ENCODE measurements at regions of chr15 and their contacts with region 1.

Region 1: DNA sequence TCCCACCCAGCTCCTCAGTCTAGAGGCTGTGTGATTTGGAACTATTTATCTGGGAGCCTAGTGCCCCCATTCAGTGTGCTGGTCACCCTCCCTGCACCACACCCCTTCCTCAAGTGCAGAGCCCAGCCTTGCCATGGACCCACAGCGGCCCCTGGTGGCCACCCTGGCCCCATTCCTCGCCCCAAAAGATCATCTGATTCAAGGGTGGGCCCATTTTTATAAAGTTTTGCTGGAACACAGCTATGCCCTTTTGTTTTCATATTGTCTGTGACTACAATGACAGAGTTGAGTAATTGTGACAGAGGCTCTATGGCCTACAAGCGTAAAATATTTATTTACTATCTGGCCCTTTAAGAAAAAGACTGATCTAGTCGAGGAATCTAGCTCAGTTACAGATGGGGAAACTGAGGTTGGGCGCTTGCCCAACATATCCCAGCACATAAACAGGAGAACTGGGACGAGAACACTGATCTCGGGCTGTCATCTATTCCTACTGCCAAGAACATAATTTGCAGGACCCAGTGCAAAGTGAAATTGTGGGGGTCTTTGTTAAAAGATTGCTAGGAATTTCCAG is 1.8 kb downstream of the FES start:
- DNase-seq: peak; percentile 62 to 87 (median 74)
- ATAC-seq: peak; percentile 70
- H3K4me3 ChIP-seq: peak overlapping the region; percentile 42
- H3K4me3 Mint-ChIP-seq: no peak overlapping the region
- H3K27ac ChIP-seq: no peak overlapping the region
- H3K27ac Mint-ChIP-seq: no peak overlapping the region
- H3K4me1 ChIP-seq: peaks cover 26% of the 10 kb centered on the region
- H3K4me1 Mint-ChIP-seq: peaks cover 13% of the 10 kb centered on the region
- H3K27me3 ChIP-seq: peaks cover 3 to 5% of the 10 kb centered on the region in 2 experiments
- H3K27me3 Mint-ChIP-seq: peaks cover 15% of the 10 kb centered on the region
- CTCF ChIP-seq: peak; percentile 98

Region 2: DNA sequence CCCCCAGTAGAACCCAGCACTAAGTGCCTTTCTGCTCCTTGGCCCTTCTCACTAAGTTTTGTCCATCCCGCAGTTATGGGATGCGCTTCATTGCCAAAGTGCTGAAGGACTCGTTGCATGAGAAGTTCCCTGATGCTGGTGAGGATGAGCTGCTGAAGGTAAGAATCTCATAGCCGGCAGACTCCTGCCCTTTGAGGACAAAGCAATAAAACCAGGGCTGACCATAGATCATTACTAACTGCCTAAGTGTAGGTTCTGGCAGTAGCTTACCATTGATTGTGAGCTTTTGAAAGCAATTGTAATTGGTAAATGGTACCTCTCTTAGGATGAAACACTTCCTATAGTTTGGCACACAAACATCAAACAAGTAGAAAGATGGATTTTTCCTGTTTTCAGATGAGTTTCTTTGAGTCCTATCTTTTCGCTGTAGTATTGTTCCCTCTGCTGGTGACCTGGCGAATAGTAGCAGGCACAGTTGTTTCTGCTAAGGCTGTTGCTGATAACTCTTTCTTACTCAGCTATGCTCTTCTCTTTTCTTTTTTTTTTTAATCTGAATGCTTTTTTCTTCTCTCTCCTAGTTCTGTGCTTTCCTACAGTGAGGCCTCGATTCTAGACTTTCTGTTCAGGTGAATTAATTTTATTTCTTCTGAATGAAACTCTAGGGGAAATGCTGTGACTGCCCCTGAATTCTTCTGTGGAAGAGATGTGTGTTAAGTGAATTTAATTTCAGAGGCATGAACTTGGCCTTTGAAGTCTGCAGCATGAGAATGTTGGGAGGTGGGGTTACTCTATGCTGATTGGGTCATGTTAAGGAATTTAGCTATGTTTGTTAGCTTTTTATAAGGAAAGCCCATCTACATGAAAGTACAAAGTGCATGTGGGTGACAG is 403.8 kb before region 1 on chr15:
- CTCF ChIA-PET with region 1: no interaction called
- POLR2A ChIA-PET with region 1: no interaction called
- intact Hi-C with region 1: loop called in 1 of 2 experiments (anchors 10 kb)
- DNase-seq: peak; percentile 17 to 71 (median 38)
- ATAC-seq: peak; percentile 63
- H3K4me3 ChIP-seq: no peak overlapping the region
- H3K4me3 Mint-ChIP-seq: no peak overlapping the region
- H3K27ac ChIP-seq: no peak overlapping the region
- H3K27ac Mint-ChIP-seq: no peak overlapping the region
- H3K4me1 ChIP-seq: peaks cover 20% of the 10 kb centered on the region
- H3K4me1 Mint-ChIP-seq: peaks cover 36% of the 10 kb centered on the region
- H3K27me3 ChIP-seq: no peaks in the 10 kb centered on the region
- H3K27me3 Mint-ChIP-seq: no peaks in the 10 kb centered on the region
- CTCF ChIP-seq: peak; percentile 80

Region 3: GRCh38 chr15:90648137-90649070 is 237.7 kb before region 1 on chr15:
- CTCF ChIA-PET with region 1: interaction called, 17 read pairs
- POLR2A ChIA-PET with region 1: interaction called, 4 read pairs
- intact Hi-C with region 1: loop called (anchors 1 kb)
- DNase-seq: peak; percentile 17 to 83 (median 44)
- ATAC-seq: peak; percentile 83
- H3K4me3 ChIP-seq: no peak overlapping the region
- H3K4me3 Mint-ChIP-seq: peak overlapping the region; percentile 30
- H3K27ac ChIP-seq: no peak overlapping the region
- H3K27ac Mint-ChIP-seq: peak overlapping the region; percentile 16
- H3K4me1 ChIP-seq: peaks cover 27% of the 10 kb centered on the region
- H3K4me1 Mint-ChIP-seq: peaks cover 34% of the 10 kb centered on the region
- H3K27me3 ChIP-seq: peaks cover 0 to 2% of the 10 kb centered on the region in 2 experiments
- H3K27me3 Mint-ChIP-seq: no peaks in the 10 kb centered on the region
- CTCF ChIP-seq: peak; percentile 93

Region 4: DNA sequence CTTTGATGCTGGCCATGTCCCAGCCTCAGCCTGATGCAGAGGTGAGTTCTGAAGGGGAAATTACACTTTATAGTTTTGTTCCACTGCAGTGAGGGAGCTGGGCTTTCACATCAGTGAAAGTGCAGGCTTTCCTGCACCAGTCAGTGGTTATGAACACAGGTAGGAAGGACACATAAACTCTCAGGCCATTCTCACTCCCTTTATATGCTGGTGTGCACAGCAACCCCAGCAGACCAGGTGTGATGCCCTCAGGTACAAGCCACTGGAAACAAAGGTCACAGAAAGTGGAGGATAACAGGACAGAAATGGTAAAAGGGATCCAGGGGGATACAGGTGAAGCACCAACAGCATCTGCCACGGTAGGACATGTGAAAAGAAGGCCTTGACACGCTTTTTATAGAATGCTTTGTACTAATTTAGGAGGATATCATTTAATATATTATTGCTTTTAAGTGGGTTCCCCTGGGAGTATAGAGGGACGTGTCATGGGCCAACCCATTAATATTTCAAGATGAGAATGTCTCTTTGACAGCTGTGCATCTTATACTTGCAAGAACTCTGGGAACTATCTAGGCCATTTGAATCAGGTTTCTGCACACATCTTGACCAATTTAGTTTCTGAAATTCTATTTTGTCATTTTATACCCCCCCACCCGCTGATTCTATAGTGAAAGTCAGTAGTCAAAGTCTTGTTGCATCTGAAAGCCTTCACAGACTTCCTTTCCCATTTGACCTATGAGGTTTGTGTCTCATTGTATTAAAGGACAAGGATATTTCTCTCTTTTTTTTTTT is 193.9 kb before region 1 on chr15:
- CTCF ChIA-PET with region 1: no interaction called
- POLR2A ChIA-PET with region 1: no interaction called
- intact Hi-C with region 1: loop called in 1 of 2 experiments (anchors 1 kb)
- DNase-seq: no peak
- ATAC-seq: no peak
- H3K4me3 ChIP-seq: no peak overlapping the region
- H3K4me3 Mint-ChIP-seq: no peak overlapping the region
- H3K27ac ChIP-seq: no peak overlapping the region
- H3K27ac Mint-ChIP-seq: no peak overlapping the region
- H3K4me1 ChIP-seq: peaks cover 2% of the 10 kb centered on the region
- H3K4me1 Mint-ChIP-seq: peaks cover 18% of the 10 kb centered on the region
- H3K27me3 ChIP-seq: no peaks in the 10 kb centered on the region
- H3K27me3 Mint-ChIP-seq: no peaks in the 10 kb centered on the region
- CTCF ChIP-seq: no peak

Region 5: GRCh38 chr15:90808517-90809235 is 77.5 kb before region 1 on chr15:
- CTCF ChIA-PET with region 1: interaction called, 3 read pairs
- POLR2A ChIA-PET with region 1: no interaction called
- intact Hi-C with region 1: loop called in 1 of 2 experiments (anchors 1 kb)
- DNase-seq: no peak
- ATAC-seq: no peak
- H3K4me3 ChIP-seq: no peak overlapping the region
- H3K4me3 Mint-ChIP-seq: no peak overlapping the region
- H3K27ac ChIP-seq: no peak overlapping the region
- H3K27ac Mint-ChIP-seq: no peak overlapping the region
- H3K4me1 ChIP-seq: peaks cover 11% of the 10 kb centered on the region
- H3K4me1 Mint-ChIP-seq: peaks cover 6% of the 10 kb centered on the region
- H3K27me3 ChIP-seq: no peaks in the 10 kb centered on the region
- H3K27me3 Mint-ChIP-seq: no peaks in the 10 kb centered on the region
- CTCF ChIP-seq: no peak

Region 6: GRCh38 chr15:90818251-90819210 is 67.6 kb before region 1 on chr15:
- CTCF ChIA-PET with region 1: interaction called, 4 read pairs
- POLR2A ChIA-PET with region 1: no interaction called
- intact Hi-C with region 1: loop called in 1 of 2 experiments (anchors 5 kb)
- DNase-seq: peak in 4 of 14 experiments; percentile 24 to 53 (median 50)
- ATAC-seq: peak; percentile 70
- H3K4me3 ChIP-seq: no peak overlapping the region
- H3K4me3 Mint-ChIP-seq: no peak overlapping the region
- H3K27ac ChIP-seq: no peak overlapping the region
- H3K27ac Mint-ChIP-seq: no peak overlapping the region
- H3K4me1 ChIP-seq: peaks cover 56% of the 10 kb centered on the region
- H3K4me1 Mint-ChIP-seq: peaks cover 26% of the 10 kb centered on the region
- H3K27me3 ChIP-seq: no peaks in the 10 kb centered on the region
- H3K27me3 Mint-ChIP-seq: no peaks in the 10 kb centered on the region
- CTCF ChIP-seq: peak; percentile 22